Activated B cell treated with CpG ODN at 0.5 μM for 24 hours (primary cell): ENCODE measurements at regions of chr16 and their contacts with region 1.

Region 1: GRCh38 chr16:57358527-57359095 is at the start of gene CCL22:
- DNase-seq: peak; percentile 36
- ATAC-seq: peak; percentile 84
- H3K4me3 Mint-ChIP-seq: peak within 1 kb of the TSS; percentile 85
- H3K27ac Mint-ChIP-seq: peak within 1 kb of the TSS; percentile 82
- H3K4me1 Mint-ChIP-seq: peaks cover 32% of the 10 kb centered on the region
- H3K27me3 Mint-ChIP-seq: no peaks in the 10 kb centered on the region
- CTCF ChIP-seq: no peak
- total RNA-seq, gene CCL22: 276 and 288 TPM in 2 replicates

Region 2: DNA sequence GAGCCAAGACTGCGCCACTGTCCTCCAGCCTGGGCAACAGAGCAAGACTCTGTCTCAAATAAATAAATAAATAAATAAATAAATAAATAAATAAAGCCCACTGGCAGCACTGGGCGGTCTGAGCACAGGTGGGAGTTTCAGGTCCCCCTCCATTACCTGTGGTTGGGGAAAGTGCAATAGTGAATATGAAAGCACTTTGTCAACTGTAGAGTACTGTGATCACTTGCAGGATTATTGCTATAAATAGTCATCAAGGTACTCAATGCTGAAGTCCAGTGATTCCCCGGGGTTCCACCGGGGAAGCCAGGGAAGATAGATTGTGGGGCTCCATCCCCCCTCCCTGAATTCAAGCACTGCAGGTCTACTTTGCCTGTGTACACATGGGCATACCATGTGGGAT is 308.9 kb before region 1 on chr16:
- CTCF ChIA-PET with region 1: no interaction called
- POLR2A ChIA-PET with region 1: no interaction called
- intact Hi-C with region 1: no loop called
- DNase-seq: no peak
- ATAC-seq: no peak
- H3K4me3 Mint-ChIP-seq: peak overlapping the region; percentile 76
- H3K27ac Mint-ChIP-seq: peak overlapping the region; percentile 78
- H3K4me1 Mint-ChIP-seq: peaks cover 68% of the 10 kb centered on the region
- H3K27me3 Mint-ChIP-seq: no peaks in the 10 kb centered on the region
- CTCF ChIP-seq: no peak

Region 3: DNA sequence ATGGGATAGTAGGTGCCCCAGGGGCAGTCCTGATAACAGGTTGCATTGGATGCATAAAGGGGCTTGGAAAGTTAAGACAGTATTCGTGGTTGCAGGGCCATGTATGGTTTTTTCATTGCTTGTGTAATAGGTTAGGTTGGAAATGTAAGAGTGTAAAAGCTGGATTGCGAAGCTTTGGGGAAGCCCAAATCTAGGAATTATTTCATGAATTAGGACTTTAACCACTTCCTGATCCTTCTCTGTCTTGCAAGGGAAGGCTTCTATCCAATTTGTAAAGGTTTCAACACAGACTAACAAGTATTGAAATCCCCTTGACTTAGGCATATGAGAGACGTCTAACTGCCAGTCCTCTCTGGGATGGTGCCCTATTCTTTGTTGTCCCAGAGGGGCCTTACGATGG is 38.2 kb after region 1 on chr16:
- CTCF ChIA-PET with region 1: no interaction called
- POLR2A ChIA-PET with region 1: no interaction called
- intact Hi-C with region 1: loop called (anchors 2 kb)
- DNase-seq: no peak
- ATAC-seq: no peak
- H3K4me3 Mint-ChIP-seq: no peak overlapping the region
- H3K27ac Mint-ChIP-seq: no peak overlapping the region
- H3K4me1 Mint-ChIP-seq: peaks cover 32% of the 10 kb centered on the region
- H3K27me3 Mint-ChIP-seq: no peaks in the 10 kb centered on the region
- CTCF ChIP-seq: no peak

Region 4: DNA sequence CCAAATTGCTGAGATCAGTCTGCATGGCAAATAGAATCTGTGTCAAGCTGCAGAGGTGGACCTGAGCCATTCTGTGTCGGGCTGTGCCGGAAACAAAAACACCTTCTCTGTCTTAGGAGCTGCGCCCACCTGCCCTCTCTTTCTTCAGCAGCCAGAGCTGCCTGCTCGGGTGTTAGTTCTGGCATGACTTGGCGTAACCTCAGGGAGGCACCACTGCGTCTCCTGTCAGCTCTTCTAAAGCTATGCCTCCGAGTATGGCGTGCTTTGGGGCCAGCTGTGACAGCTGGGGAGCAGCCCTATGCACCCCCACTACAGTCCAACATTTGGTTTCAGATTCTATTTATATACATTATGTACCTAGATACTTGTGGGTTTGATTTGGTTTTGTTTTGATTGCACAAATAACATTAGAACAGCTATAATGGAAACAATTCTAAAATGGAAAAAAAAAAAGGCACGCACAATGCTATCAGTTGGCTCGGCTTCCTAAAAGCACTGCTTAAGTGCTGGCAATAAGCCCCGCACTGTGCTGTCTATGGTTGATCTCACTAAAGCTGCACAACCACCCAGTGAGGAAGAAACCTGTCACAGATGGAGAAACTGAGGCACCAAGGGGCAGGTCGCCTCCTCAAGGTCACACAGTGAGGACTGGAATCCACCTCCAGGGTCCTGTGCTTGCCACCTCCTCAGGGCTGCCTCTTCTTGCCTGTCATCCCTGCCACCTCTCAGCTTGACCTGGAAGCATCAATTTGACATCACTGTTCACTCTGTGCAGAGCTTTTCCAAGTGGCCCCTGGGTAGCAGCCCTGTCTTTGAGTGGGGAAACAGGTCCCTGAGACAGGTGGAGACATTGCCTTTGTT is 251.2 kb after region 1 on chr16:
- CTCF ChIA-PET with region 1: no interaction called
- POLR2A ChIA-PET with region 1: no interaction called
- intact Hi-C with region 1: no loop called
- DNase-seq: no peak
- ATAC-seq: peak; percentile 81
- H3K4me3 Mint-ChIP-seq: peak overlapping the region; percentile 35
- H3K27ac Mint-ChIP-seq: peak overlapping the region; percentile 11
- H3K4me1 Mint-ChIP-seq: peaks cover 14% of the 10 kb centered on the region
- H3K27me3 Mint-ChIP-seq: peaks cover 2% of the 10 kb centered on the region
- CTCF ChIP-seq: no peak

Region 5: DNA sequence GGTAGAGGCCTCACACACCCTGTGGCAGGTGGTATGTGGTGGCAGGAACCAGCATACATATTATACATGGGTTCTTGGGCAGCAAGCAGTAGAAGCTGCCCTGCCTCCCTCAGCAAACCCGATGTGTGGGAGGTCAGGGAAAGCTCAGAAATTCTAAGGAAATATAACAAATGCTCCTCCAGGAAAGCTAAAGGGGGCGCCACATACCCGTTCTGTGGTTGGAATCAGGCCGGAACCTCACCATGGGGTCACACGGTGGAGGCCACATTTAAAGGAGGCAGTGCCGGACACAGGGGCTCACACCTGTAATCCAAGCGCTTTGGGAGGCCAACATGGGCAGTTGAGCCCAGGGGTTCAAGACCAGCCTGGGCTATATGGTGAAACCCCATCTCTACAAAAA is 364.6 kb after region 1 on chr16:
- CTCF ChIA-PET with region 1: no interaction called
- POLR2A ChIA-PET with region 1: no interaction called
- intact Hi-C with region 1: no loop called
- DNase-seq: no peak
- ATAC-seq: no peak
- H3K4me3 Mint-ChIP-seq: no peak overlapping the region
- H3K27ac Mint-ChIP-seq: no peak overlapping the region
- H3K4me1 Mint-ChIP-seq: peaks cover 8% of the 10 kb centered on the region
- H3K27me3 Mint-ChIP-seq: no peaks in the 10 kb centered on the region
- CTCF ChIP-seq: no peak